ENCODE measurements at regions of chr18 and their contacts with region 1.

Region 1: DNA sequence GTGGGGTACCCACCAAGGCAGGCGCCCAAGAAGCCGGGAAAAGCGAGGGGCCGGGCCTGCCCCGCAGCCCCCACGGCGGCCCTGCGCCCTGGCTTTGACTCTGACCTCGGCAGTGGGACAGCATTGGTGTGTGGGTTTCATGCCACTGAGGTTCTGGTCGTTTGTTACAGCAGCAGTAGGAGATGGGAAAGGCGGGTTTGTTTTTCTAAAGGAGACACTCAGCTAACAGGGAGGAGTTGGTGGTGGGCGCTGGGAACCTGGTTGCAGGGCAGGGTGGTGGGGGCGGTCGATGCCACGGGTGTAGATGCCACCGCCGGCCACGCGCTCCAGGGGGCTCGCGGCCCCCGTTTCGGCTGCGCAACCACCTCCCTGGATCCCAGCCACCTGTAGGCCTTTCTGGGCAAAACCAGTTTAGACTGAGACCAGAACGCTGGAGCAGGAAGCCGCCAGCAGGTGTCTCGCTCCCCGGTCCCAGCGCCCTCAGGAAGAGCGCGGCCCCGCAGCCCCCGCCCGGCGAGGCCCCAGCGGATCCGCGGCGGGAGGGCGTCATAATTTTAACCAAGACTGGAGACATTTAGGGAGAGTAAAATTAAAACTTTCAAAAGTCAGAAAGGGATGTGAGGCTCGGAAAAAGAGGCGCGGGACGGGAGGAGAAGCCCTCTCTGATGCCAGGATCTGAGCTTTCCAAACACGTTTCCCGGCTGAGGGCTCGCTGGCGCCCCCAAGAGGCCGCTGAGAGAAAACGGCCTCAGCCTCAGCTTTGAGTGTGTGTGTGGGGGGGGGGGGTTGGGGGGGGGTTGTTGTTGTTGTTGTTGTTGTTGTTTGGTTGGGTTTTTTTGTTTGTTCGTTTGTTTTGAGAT is 17.4 kb downstream of the CIDEA start:
- DNase-seq: no peak
- H3K4me3 ChIP-seq: peak overlapping the region; percentile 57
- CTCF ChIP-seq: peak; percentile 82

Region 2: GRCh38 chr18:12254136-12254829 is 17.3 kb before region 1 on chr18 and contains the start of gene CIDEA:
- CTCF ChIA-PET with region 1: interaction called, 23 read pairs
- POLR2A ChIA-PET with region 1: interaction called, 4 read pairs
- DNase-seq: no peak
- H3K4me3 ChIP-seq: peak within 1 kb of the TSS; percentile 42
- CTCF ChIP-seq: no peak

Region 3: DNA sequence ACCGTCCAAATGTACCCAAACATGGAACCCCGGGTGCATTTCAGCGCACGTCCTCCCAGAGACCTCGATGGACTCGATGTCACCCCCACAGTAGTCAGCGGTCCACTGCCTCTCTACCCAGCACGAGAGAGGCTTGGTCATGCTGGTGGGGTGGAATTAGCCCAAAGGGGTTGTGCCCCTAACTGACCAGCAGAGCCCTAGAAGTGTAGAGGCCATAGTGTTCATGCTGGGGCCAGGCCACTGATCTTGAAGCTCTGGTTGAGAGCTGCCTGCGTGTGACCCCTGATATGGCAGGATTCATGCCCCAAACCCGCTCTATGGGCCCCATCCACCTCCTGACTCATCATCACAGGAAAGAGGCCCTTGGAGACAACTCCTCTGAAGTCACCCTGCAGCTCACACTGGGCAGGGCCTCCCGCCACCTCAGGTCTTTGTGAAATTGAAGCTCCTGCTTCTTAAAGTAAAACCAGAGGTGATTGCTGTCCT is 24.3 kb after region 1 on chr18:
- CTCF ChIA-PET with region 1: interaction called, 12 read pairs
- POLR2A ChIA-PET with region 1: interaction called, 3 read pairs
- DNase-seq: no peak
- H3K4me3 ChIP-seq: no peak overlapping the region
- CTCF ChIP-seq: no peak

Region 4: GRCh38 chr18:12317664-12318333 is 46.2 kb after region 1 on chr18:
- CTCF ChIA-PET with region 1: interaction called, 34 read pairs
- POLR2A ChIA-PET with region 1: no interaction called
- DNase-seq: no peak
- H3K4me3 ChIP-seq: no peak overlapping the region
- CTCF ChIP-seq: no peak

Region 5: GRCh38 chr18:12361770-12362378 is 90.3 kb after region 1 on chr18:
- CTCF ChIA-PET with region 1: interaction called, 10 read pairs
- POLR2A ChIA-PET with region 1: no interaction called
- DNase-seq: no peak
- H3K4me3 ChIP-seq: no peak overlapping the region
- CTCF ChIP-seq: no peak

Region 6: GRCh38 chr18:12478269-12479047 is 206.9 kb after region 1 on chr18:
- CTCF ChIA-PET with region 1: no interaction called
- POLR2A ChIA-PET with region 1: no interaction called
- DNase-seq: no peak
- H3K4me3 ChIP-seq: no peak overlapping the region
- CTCF ChIP-seq: no peak